ENCODE measurements at regions of chr1 and their contacts with region 1.

Region 1: DNA sequence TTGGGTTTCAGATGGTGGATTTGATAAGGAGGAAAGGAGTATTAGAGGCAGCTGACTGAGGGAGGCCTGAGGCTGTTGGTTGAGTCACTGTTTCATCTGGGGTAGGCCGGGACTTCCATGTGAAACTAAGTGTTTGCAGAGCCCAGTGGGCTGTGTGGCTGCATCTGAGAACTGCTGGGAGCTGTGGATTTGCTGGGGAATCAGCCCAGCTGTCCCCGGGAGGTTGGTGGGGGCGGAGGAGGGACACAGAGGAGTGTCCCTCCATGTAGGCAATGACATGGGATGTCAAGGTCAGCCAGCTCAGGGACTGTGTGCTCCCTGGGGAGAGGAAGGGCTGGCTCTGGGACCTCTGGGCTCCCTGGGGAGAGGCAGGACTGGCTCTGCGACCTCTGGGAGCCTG is 36.4 kb downstream of the SLC2A7 start:
- DNase-seq: no peak
- ATAC-seq: no peak
- H3K4me3 ChIP-seq: no peak overlapping the region
- H3K4me3 Mint-ChIP-seq: no peak overlapping the region
- H3K27ac ChIP-seq: no peak overlapping the region
- H3K27ac Mint-ChIP-seq: peak overlapping the region in 1 of 2 donors; percentile 2
- H3K4me1 ChIP-seq: peaks cover 14 to 24% of the 10 kb centered on the region in 2 experiments
- H3K4me1 Mint-ChIP-seq: peaks cover 20 to 28% (median 22%) of the 10 kb centered on the region in 3 donors
- H3K27me3 ChIP-seq: peaks cover 0 to 3% of the 10 kb centered on the region in 2 experiments
- H3K27me3 Mint-ChIP-seq: no peaks in the 10 kb centered on the region

Region 2: GRCh38 chr1:8817406-8818324 is 172.2 kb before region 1 on chr1 and contains the start of gene RERE:
- CTCF ChIA-PET with region 1: no interaction called
- POLR2A ChIA-PET with region 1: no interaction called
- DNase-seq: peak; percentile 76 to 99 (median 93)
- ATAC-seq: peak; percentile 96 to 98 (median 98)
- H3K4me3 ChIP-seq: peak within 1 kb of the TSS; percentile 87 to 96
- H3K4me3 Mint-ChIP-seq: peak within 1 kb of the TSS; percentile 85 to 93 (median 87)
- H3K27ac ChIP-seq: peak within 1 kb of the TSS; percentile 89
- H3K27ac Mint-ChIP-seq: peak within 1 kb of the TSS; percentile 94 to 96
- H3K4me1 ChIP-seq: peaks cover 10 to 23% of the 10 kb centered on the region in 2 experiments
- H3K4me1 Mint-ChIP-seq: peaks cover 41 to 50% (median 42%) of the 10 kb centered on the region in 3 donors
- H3K27me3 ChIP-seq: peaks cover 0 to 5% of the 10 kb centered on the region in 2 experiments
- H3K27me3 Mint-ChIP-seq: peaks cover 0 to 8% of the 10 kb centered on the region in 2 donors
- total RNA-seq, gene RERE: 85.1 to 116 (median 103) TPM

Region 3: DNA sequence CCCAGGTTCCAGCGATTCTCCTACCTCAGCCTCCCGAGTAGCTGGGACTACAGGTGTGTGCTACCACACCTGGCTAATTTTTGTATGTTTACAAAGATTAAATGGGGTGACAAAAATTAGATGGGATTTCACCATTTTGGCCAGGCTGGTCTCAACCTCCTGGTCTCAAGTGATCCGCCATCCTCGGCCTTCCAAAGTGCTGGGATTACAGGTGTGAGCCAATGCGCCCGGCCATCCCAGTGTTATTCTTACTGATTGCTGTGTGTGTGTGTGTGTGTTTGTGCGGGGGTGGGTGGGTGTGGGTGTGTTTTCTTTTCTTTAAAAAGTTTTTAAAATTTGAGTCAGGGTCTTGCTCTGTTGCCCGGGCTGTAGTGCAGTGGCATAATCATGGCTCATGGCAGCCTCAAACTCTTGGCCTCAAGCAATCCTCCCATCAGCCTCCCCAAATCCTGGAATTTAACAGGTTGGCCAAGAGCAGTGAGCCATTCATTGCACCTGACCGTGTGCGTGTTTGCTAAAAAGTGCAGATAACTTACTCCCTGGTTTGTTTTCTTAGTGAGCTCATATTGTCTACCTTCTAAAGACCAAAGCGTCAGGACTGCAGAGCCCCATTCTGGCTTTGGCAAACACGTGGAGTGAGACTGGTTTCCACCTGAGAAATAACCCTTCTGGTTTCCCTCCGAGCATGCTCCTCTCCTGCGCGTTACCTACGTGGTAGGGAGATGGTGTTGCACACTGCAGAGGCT is 76.5 kb before region 1 on chr1:
- CTCF ChIA-PET with region 1: interaction called, 4 to 13 read pairs
- POLR2A ChIA-PET with region 1: no interaction called
- DNase-seq: no peak
- ATAC-seq: no peak
- H3K4me3 ChIP-seq: no peak overlapping the region
- H3K4me3 Mint-ChIP-seq: no peak overlapping the region
- H3K27ac ChIP-seq: no peak overlapping the region
- H3K27ac Mint-ChIP-seq: no peak overlapping the region
- H3K4me1 ChIP-seq: peaks cover 2 to 4% of the 10 kb centered on the region in 2 experiments
- H3K4me1 Mint-ChIP-seq: peaks cover 6 to 14% (median 6%) of the 10 kb centered on the region in 3 donors
- H3K27me3 ChIP-seq: peaks cover 0 to 23% of the 10 kb centered on the region in 2 experiments
- H3K27me3 Mint-ChIP-seq: no peaks in the 10 kb centered on the region